ENCODE measurements at regions of chr2 and their contacts with region 1.

Region 1: GRCh38 chr2:26244309-26245121 is at the starts of genes HADHA and HADHB:
- DNase-seq: peak; percentile 68 to 93 (median 80)
- ATAC-seq: peak; percentile 81
- H3K4me3 ChIP-seq: peak within 1 kb of the TSS; percentile 96
- H3K4me3 Mint-ChIP-seq: peak within 1 kb of the TSS; percentile 100
- H3K27ac ChIP-seq: peak within 1 kb of the TSS; percentile 95 to 98
- H3K27ac Mint-ChIP-seq: peak within 1 kb of the TSS; percentile 97
- H3K4me1 ChIP-seq: peaks cover 33% of the 10 kb centered on the region
- H3K4me1 Mint-ChIP-seq: peaks cover 76% of the 10 kb centered on the region
- H3K27me3 ChIP-seq: no peaks in the 10 kb centered on the region
- H3K27me3 Mint-ChIP-seq: no peaks in the 10 kb centered on the region
- CTCF ChIP-seq: no peak
- total RNA-seq, gene HADHA: 72.4 to 73.7 TPM
- total RNA-seq, gene HADHB: 25.2 to 30.3 TPM

Region 2: GRCh38 chr2:25673300-25674076 is 571.0 kb before region 1 on chr2 and contains the start of gene DTNB:
- CTCF ChIA-PET with region 1: no interaction called
- POLR2A ChIA-PET with region 1: no interaction called
- intact Hi-C with region 1: loop called in 1 of 2 experiments (anchors 5 kb)
- DNase-seq: peak; percentile 58 to 92 (median 76)
- ATAC-seq: peak; percentile 75
- H3K4me3 ChIP-seq: peak within 1 kb of the TSS; percentile 84
- H3K4me3 Mint-ChIP-seq: peak within 1 kb of the TSS; percentile 91
- H3K27ac ChIP-seq: peak within 1 kb of the TSS; percentile 43 to 66
- H3K27ac Mint-ChIP-seq: peak within 1 kb of the TSS; percentile 85
- H3K4me1 ChIP-seq: peaks cover 23% of the 10 kb centered on the region
- H3K4me1 Mint-ChIP-seq: peaks cover 35% of the 10 kb centered on the region
- H3K27me3 ChIP-seq: peaks cover 0 to 2% of the 10 kb centered on the region in 2 experiments
- H3K27me3 Mint-ChIP-seq: no peaks in the 10 kb centered on the region
- CTCF ChIP-seq: no peak
- total RNA-seq, gene DTNB: 30.1 to 33.6 TPM

Region 3: DNA sequence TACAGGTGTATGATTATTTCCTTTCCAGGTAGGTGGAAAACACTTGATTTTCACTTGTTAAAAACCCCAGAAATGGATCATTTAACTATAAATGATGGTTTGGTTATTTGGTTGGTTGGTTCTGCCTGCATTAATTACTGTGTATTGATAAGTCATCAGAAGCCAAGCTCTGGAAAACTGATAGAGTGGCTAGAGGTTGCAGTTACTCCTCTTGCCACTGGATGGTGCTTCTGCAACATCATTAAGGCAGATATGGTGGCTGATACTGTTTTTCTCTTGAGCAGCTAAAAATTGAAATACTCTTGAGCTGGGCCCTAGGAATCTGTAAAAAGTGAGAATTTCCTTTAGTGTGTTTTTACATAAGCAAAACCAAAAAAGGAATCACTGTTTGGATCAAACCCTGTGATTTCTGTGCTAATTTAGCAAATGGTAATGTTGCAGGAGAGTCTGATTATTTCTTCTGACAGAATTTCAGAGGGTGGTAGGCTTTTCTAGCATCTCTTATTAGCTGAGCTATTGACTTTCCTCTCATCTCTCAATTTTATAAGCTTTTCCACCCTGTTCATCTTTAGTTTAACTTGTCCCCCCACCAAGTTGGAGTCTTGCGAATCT is 156.4 kb before region 1 on chr2:
- CTCF ChIA-PET with region 1: interaction called, 3 read pairs
- POLR2A ChIA-PET with region 1: no interaction called
- intact Hi-C with region 1: loop called in 1 of 2 experiments (anchors 5 kb)
- DNase-seq: peak in 5 of 14 experiments; percentile 9 to 61 (median 47)
- ATAC-seq: peak; percentile 86
- H3K4me3 ChIP-seq: no peak overlapping the region
- H3K4me3 Mint-ChIP-seq: no peak overlapping the region
- H3K27ac ChIP-seq: no peak overlapping the region
- H3K27ac Mint-ChIP-seq: no peak overlapping the region
- H3K4me1 ChIP-seq: peaks cover 4% of the 10 kb centered on the region
- H3K4me1 Mint-ChIP-seq: peaks cover 48% of the 10 kb centered on the region
- H3K27me3 ChIP-seq: no peaks in the 10 kb centered on the region
- H3K27me3 Mint-ChIP-seq: no peaks in the 10 kb centered on the region
- CTCF ChIP-seq: peak; percentile 77

Region 4: DNA sequence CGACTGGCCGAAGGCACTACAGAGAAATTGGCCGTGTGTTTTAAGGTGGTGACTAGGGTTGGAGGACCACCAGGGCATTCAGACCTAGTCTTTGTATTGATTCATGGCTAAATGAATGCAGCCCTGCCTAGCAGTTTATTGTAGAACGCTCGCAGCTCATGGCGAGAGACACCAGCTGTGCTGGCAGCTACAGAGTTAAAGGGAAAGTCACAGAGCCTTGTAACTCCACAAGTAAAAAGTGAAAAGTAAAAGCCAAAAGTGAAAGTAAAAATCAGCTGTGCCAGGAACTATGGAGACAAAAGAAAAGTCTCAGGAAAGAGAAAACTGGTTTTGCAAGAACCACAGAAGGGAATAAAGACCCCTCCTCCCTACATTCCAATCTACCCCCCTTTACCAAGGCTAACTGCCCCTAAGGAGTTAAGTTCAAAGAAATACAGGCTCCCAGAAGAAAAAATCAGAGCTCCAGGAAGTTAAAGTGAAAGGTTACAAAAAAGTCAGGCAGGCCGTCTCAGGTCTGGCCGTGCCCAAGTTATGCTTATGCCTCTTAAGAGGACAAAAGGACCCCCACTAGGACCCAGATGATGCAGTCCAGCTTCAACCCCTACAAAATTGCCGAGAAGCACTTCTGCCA is 55.1 kb after region 1 on chr2:
- CTCF ChIA-PET with region 1: interaction called, 4 read pairs
- POLR2A ChIA-PET with region 1: interaction called, 46 read pairs
- intact Hi-C with region 1: loop called (anchors 2 kb)
- DNase-seq: peak in 8 of 14 experiments; percentile 9 to 62 (median 40)
- ATAC-seq: peak; percentile 46
- H3K4me3 ChIP-seq: peak overlapping the region; percentile 79
- H3K4me3 Mint-ChIP-seq: no peak overlapping the region
- H3K27ac ChIP-seq: peak overlapping the region; percentile 62 to 65
- H3K27ac Mint-ChIP-seq: no peak overlapping the region
- H3K4me1 ChIP-seq: peaks cover 24% of the 10 kb centered on the region
- H3K4me1 Mint-ChIP-seq: no peaks in the 10 kb centered on the region
- H3K27me3 ChIP-seq: no peaks in the 10 kb centered on the region
- H3K27me3 Mint-ChIP-seq: no peaks in the 10 kb centered on the region
- CTCF ChIP-seq: no peak